Heart left ventricle (tissue), 16 donors: ENCODE measurements at regions of chr15 and their contacts with region 1.

Region 1: GRCh38 chr15:45198337-45199135 is 10.8 kb upstream of the SHF start:
- DNase-seq: peak; percentile 92 to 97 (median 95)
- ATAC-seq: peak; percentile 77 to 84 (median 80)
- H3K4me3 ChIP-seq: peak overlapping the region; percentile 25 to 85 (median 70)
- H3K27ac ChIP-seq: peak overlapping the region; percentile 94 to 99 (median 98)
- H3K4me1 ChIP-seq: peaks cover 0 to 43% (median 6%) of the 10 kb centered on the region in 12 donors
- H3K27me3 ChIP-seq: no peaks in the 10 kb centered on the region
- CTCF ChIP-seq: peak in 11 of 12 donors; percentile 52 to 92 (median 71)
- POLR2A ChIP-seq: peak in 1 of 2 donors; percentile 96

Region 2: DNA sequence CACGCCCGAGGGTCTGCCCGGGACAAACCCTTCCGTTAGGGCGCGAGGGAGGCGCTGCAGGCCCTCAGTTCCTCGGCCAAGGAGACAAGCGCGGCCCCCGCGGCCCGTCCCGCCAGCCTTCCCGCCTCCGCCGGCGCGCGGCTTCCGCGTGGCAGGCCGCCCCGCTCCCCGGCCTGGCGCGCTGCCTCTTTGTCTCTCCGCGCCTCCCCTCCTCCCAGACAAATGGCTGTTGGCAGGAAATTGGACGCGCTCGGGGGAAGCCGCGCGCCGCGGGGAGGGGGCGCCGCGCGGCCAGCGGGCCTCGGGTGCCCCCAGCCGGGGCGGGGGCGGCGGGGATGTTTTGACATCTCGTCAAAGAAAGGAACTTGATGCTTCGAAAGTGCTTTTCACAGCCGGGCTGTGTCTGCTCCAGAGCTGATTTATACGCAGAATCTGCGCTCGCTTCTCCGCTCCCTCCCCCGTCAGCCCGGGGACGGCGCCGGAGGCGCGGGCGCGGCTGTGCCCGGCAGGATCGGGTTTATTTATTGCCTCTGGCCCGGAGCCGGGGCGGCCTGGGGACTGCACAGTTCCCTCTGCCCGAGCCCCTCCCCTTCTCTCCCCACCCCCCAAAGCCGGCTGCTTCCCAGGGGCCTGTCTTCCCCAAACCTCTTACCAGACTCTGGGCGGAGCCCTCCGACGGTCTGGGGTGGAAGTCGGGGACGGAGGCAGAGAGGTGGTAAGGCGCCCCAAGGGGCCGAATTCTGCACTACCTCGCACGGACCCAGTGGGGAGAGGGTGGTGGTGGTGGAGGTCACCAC is 31.5 kb before region 1 on chr15:
- intact Hi-C with region 1: loop called in 8 of 10 experiments (anchors 1 to 5 kb)
- DNase-seq: peak; percentile 85 to 93 (median 91)
- ATAC-seq: peak; percentile 67 to 87 (median 85)
- H3K4me3 ChIP-seq: peak overlapping the region; percentile 59 to 93 (median 76)
- H3K27ac ChIP-seq: peak overlapping the region; percentile 94 to 100 (median 99)
- H3K4me1 ChIP-seq: peaks cover 0 to 31% (median 14%) of the 10 kb centered on the region in 12 donors
- H3K27me3 ChIP-seq: no peaks in the 10 kb centered on the region
- CTCF ChIP-seq: peak; percentile 32 to 70 (median 58)
- POLR2A ChIP-seq: peak in 1 of 2 donors; percentile 39

Region 3: GRCh38 chr15:45307230-45307924 is 108.8 kb after region 1 on chr15:
- intact Hi-C with region 1: no loop called
- DNase-seq: no peak
- ATAC-seq: peak in 2 of 4 donors; percentile 54 to 68
- H3K4me3 ChIP-seq: peak overlapping the region in 7 of 12 donors; percentile 27 to 45 (median 33)
- H3K27ac ChIP-seq: peak overlapping the region in 2 of 12 donors; percentile 28 to 37
- H3K4me1 ChIP-seq: peaks cover 0 to 12% (median 3%) of the 10 kb centered on the region in 12 donors
- H3K27me3 ChIP-seq: peaks cover 0 to 4% (median 0%) of the 10 kb centered on the region in 9 donors
- CTCF ChIP-seq: peak; percentile 38 to 78 (median 60)
- POLR2A ChIP-seq: no peak